Stomach (tissue), 19 donors: ENCODE measurements at regions of chr2 and their contacts with region 1.

Region 1: DNA sequence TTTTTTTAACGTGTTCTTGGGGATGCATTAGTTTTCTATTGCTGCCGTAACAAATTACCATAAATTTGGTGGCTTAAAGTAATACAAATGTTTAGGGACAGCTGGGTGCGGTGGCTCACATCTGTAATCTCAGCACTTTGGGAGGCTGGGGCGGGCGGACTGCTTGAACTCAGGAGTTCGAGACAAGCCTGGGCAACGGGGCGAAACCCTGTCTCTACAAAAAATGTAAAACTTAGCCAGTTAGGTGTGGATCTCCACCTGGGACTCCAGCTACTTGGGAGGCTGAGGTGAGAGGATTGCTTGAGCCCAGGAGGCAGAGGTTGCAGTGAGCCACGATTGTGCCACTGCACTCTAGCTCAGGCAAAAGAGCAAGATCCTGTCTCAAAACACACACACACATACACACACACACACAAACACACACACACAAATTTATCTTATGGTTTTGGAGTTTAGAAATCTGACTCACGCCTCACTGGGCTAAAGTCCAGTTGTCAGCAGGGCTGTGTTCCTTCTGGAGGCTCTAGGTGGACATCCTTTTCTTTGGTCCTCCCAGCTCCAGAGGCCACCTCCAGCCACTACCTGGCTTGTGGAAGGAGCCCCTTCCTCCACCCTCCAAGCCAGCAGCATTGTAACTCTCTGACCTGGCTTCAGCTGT is 76.1 kb downstream of the SEPTIN10 start:
- DNase-seq: peak in 1 of 2 donors; percentile 24
- H3K4me3 ChIP-seq: no peak overlapping the region
- H3K27ac ChIP-seq: no peak overlapping the region
- H3K4me1 ChIP-seq: peaks cover 0 to 7% (median 3%) of the 10 kb centered on the region in 4 donors
- H3K27me3 ChIP-seq: no peaks in the 10 kb centered on the region
- CTCF ChIP-seq: no peak
- EP300 ChIP-seq: no peak
- POLR2A ChIP-seq: no peak

Region 2: DNA sequence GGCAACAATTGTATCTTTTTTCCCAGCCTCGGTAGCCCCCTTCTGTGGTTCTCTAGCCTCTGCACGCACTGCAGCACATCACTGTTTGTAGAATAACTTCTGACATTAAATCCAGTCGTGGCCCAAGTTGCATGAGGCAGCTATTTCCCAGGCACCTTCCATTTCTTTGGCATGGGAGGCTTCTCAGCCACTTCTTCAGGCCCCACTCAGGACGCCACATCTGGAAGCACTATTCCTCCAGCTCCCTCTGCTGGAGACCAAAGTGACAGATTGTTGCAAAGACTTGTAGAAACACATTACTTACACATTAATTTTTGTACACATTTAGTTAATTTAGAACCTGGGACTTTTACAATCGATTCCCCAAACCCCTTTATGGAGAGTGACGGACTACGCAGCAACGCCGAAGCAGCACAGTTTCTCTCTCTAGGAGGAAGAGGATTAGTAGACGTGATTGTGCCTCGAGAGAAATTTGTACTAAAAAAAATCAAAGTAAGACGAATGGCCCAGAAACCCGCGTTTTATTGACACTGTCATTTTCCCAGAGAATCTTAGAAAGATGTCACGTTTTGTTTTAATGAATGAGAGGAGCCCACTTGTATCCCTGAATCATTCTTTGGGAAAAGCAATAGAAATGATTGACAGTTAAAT is 198.6 kb after region 1 on chr2:
- intact Hi-C with region 1: loop called (anchors 5 kb)
- DNase-seq: peak; percentile 55 to 75
- H3K4me3 ChIP-seq: no peak overlapping the region
- H3K27ac ChIP-seq: no peak overlapping the region
- H3K4me1 ChIP-seq: no peaks in the 10 kb centered on the region
- H3K27me3 ChIP-seq: no peaks in the 10 kb centered on the region
- CTCF ChIP-seq: peak in 5 of 7 experiments; percentile 28 to 72 (median 58)
- EP300 ChIP-seq: no peak
- POLR2A ChIP-seq: no peak